ENCODE measurements at regions of chr7 and their contacts with region 1.

Region 1: DNA sequence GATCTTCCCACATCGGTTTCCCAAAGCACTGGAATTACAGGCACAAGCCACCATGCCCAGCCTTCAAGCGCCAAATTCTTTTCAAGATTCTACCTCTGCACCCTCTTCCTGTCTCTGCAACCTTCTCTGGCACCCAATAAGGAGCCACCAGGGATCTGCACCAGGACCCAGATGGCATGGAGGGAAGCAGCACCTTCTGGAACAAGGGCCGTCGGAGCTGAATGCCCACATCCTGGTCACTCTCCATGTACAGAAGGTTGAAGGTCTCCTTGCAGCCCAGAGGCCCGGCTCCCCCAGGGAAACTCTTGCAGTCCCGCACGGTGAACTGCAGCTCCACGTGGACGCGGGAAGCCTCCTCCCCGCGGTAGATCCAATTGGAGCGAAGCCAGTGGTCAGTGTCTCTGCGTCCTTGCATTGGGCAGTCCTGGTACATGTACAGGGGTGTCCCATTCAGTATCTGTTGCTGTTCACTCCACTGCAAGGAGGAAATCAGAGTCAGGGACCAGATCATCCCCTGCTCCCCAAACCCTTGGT is 7.5 kb downstream of the EPHA1 start:
- DNase-seq: no peak

Region 2: GRCh38 chr7:143362131-143363015 is 38.8 kb before region 1 on chr7 and contains the start of gene FAM131B:
- CTCF ChIA-PET with region 1: no interaction called
- POLR2A ChIA-PET with region 1: no interaction called
- DNase-seq: peak; percentile 66

Region 3: GRCh38 chr7:143416565-143417149 is 15.5 kb after region 1 on chr7:
- CTCF ChIA-PET with region 1: interaction called, 13 read pairs
- POLR2A ChIA-PET with region 1: interaction called, 3 read pairs
- DNase-seq: peak; percentile 74

Measured in HEK293T (cell line).